ENCODE measurements at regions of chr10 and their contacts with region 1.

Region 1: GRCh38 chr10:124992462-124993344 is 50.8 kb downstream of the ZRANB1 start:
- DNase-seq: peak; percentile 49
- ATAC-seq: peak; percentile 50
- H3K4me3 Mint-ChIP-seq: no peak overlapping the region
- H3K27ac Mint-ChIP-seq: no peak overlapping the region
- H3K4me1 Mint-ChIP-seq: no peaks in the 10 kb centered on the region
- H3K27me3 Mint-ChIP-seq: no peaks in the 10 kb centered on the region

Region 2: GRCh38 chr10:124943301-124944092 is 49.2 kb before region 1 on chr10:
- CTCF ChIA-PET with region 1: no interaction called
- POLR2A ChIA-PET with region 1: no interaction called
- DNase-seq: no peak
- ATAC-seq: no peak
- H3K4me3 Mint-ChIP-seq: no peak overlapping the region
- H3K27ac Mint-ChIP-seq: no peak overlapping the region
- H3K4me1 Mint-ChIP-seq: peaks cover 10% of the 10 kb centered on the region
- H3K27me3 Mint-ChIP-seq: no peaks in the 10 kb centered on the region

Region 3: DNA sequence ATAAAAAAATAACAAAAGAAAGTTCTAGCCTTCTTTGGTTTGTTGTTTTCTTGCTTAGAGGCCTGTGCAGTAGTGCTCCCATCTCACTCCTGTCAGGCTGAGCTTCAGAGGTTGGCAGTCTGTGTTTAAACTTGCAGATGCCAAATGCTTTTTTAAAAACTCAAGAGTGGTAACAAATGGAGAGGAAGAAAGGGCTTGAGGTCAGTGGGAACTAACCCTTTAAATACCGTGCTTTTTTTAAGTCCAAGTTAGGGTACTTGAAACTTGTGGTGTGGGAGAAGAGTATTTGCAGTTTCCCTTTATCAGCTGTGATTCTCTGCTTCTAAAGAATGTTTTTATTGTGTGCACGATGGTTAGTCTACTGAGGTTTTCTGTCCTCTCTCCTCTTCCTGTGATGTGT is 21.4 kb before region 1 on chr10:
- CTCF ChIA-PET with region 1: interaction called, 14 read pairs
- POLR2A ChIA-PET with region 1: no interaction called
- DNase-seq: no peak
- ATAC-seq: no peak
- H3K4me3 Mint-ChIP-seq: no peak overlapping the region
- H3K27ac Mint-ChIP-seq: peak overlapping the region; percentile 58
- H3K4me1 Mint-ChIP-seq: peaks cover 25% of the 10 kb centered on the region
- H3K27me3 Mint-ChIP-seq: no peaks in the 10 kb centered on the region

Region 4: GRCh38 chr10:125027871-125028869 is 35.5 kb after region 1 on chr10:
- CTCF ChIA-PET with region 1: no interaction called
- POLR2A ChIA-PET with region 1: no interaction called
- DNase-seq: no peak
- ATAC-seq: no peak
- H3K4me3 Mint-ChIP-seq: no peak overlapping the region
- H3K27ac Mint-ChIP-seq: no peak overlapping the region
- H3K4me1 Mint-ChIP-seq: no peaks in the 10 kb centered on the region
- H3K27me3 Mint-ChIP-seq: no peaks in the 10 kb centered on the region

Region 5: DNA sequence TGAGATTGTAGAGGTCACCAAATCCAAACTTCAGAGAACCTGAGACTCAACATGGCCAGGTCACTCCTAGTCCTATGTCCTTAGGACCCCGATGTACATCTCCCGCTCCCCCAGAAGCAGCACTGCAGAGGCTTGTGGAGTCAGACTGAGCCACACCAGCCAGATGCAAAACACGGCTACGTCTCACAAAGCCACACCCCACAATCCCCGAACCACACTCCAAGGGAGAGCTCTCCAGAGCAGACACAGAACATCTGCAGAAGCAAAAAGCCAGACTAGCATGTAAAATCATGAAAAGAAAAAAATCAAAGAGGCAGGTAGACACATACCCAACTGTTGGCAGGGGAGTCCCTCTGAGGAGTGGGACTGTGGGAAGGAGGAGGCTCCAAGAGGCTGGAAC is 62.7 kb after region 1 on chr10:
- CTCF ChIA-PET with region 1: no interaction called
- POLR2A ChIA-PET with region 1: no interaction called
- DNase-seq: no peak
- ATAC-seq: no peak
- H3K4me3 Mint-ChIP-seq: no peak overlapping the region
- H3K27ac Mint-ChIP-seq: no peak overlapping the region
- H3K4me1 Mint-ChIP-seq: no peaks in the 10 kb centered on the region
- H3K27me3 Mint-ChIP-seq: peaks cover 4% of the 10 kb centered on the region